Right cardiac atrium (tissue), 5 donors: ENCODE measurements at regions of chr10 and their contacts with region 1.

Region 1: GRCh38 chr10:59906417-59907202 is at the start of gene CCDC6:
- DNase-seq: peak; percentile 94 to 98 (median 98)
- ATAC-seq: peak; percentile 97 to 98
- H3K4me3 ChIP-seq: peak within 1 kb of the TSS; percentile 90
- H3K27ac ChIP-seq: peak within 1 kb of the TSS; percentile 84
- H3K4me1 ChIP-seq: peaks cover 2% of the 10 kb centered on the region
- H3K27me3 ChIP-seq: no peaks in the 10 kb centered on the region
- total RNA-seq, gene CCDC6: 21.3 to 28.1 (median 23.8) TPM

Region 2: DNA sequence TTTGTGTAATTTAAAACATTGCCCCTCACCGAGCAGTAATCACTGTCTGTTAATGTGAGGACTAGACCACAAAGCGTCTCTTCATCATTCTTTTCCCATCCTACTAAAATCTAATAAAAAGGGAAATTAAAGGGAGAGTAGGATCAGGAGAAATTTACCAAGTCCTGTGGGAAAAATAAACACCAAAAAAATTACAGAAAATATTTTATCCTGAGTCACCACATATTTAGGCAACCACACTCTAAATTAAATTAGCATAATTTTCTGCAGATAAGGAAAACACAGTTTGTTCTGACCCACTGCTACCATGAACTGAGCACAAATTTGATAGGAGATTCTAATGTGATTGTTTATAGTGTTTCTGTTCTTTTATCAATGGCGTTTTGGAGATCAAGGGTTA is 49.6 kb before region 1 on chr10:
- intact Hi-C with region 1: loop called in 1 of 4 experiments (anchors 10 kb)
- DNase-seq: no peak
- ATAC-seq: no peak
- H3K4me3 ChIP-seq: no peak overlapping the region
- H3K27ac ChIP-seq: no peak overlapping the region
- H3K4me1 ChIP-seq: peaks cover 4% of the 10 kb centered on the region
- H3K27me3 ChIP-seq: no peaks in the 10 kb centered on the region